Psoas muscle (tissue), 8 donors: ENCODE measurements at regions of chr9 and their contacts with region 1.

Region 1: GRCh38 chr9:89549031-89549644 is 51.2 kb upstream of the SEMA4D start:
- DNase-seq: peak; percentile 76 to 89
- ATAC-seq: peak; percentile 95 to 99 (median 96)
- H3K4me3 ChIP-seq: no peak overlapping the region
- H3K27ac ChIP-seq: no peak overlapping the region
- H3K4me1 ChIP-seq: no peaks in the 10 kb centered on the region
- H3K27me3 ChIP-seq: no peaks in the 10 kb centered on the region
- CTCF ChIP-seq: peak; percentile 98

Region 2: DNA sequence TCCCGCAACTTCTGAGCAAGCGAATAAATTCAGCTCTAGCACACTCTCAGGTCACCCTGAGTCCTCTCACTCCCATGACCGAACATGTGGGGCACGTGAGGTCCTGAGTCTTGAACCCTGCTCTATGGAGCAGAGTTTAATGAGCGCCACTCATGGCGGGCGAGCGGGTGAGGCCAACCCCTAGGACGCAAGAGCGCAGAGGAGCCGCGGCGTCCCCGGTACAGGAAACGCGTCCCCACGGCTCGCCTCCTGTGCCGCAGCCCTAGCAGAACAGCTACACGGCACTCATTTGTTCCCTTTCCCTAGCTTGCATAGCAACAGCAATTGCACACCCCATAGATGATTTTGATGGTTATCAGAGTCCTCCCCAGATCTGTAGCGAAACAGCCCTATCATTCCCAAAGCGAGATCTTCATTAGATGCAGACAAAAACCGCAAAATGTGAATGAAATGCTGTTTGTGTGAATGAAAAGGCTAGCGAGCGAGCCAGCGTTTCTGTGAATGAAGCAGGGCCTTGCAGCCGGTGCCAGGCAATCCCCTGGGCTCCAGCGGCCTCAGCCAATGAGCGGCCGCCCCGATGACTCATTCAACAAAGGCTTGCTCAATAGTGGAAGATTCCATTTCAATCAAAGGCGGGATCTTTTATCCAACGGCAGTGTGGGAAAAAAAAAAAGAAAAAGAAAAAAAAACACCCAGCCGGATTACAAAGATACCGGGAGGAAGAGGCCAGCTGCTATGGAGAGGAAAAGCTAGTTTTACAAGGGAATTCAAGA is 369.1 kb before region 1 on chr9:
- intact Hi-C with region 1: loop called in 1 of 2 experiments (anchors 10 kb)
- DNase-seq: peak; percentile 89 to 92
- ATAC-seq: peak; percentile 93 to 98 (median 96)
- H3K4me3 ChIP-seq: peak overlapping the region; percentile 66
- H3K27ac ChIP-seq: peak overlapping the region; percentile 59
- H3K4me1 ChIP-seq: peaks cover 17% of the 10 kb centered on the region
- H3K27me3 ChIP-seq: peaks cover 4 to 39% (median 17%) of the 10 kb centered on the region in 3 donors
- CTCF ChIP-seq: no peak

Region 3: GRCh38 chr9:89265214-89265613 is 283.9 kb before region 1 on chr9:
- intact Hi-C with region 1: no loop called
- DNase-seq: no peak
- ATAC-seq: no peak
- H3K4me3 ChIP-seq: no peak overlapping the region
- H3K27ac ChIP-seq: no peak overlapping the region
- H3K4me1 ChIP-seq: no peaks in the 10 kb centered on the region
- H3K27me3 ChIP-seq: no peaks in the 10 kb centered on the region
- CTCF ChIP-seq: no peak

Region 4: GRCh38 chr9:89323390-89323789 is 225.7 kb before region 1 on chr9:
- intact Hi-C with region 1: loop called (anchors 2 to 10 kb)
- DNase-seq: no peak
- ATAC-seq: no peak
- H3K4me3 ChIP-seq: no peak overlapping the region
- H3K27ac ChIP-seq: peak overlapping the region; percentile 47
- H3K4me1 ChIP-seq: peaks cover 56% of the 10 kb centered on the region
- H3K27me3 ChIP-seq: no peaks in the 10 kb centered on the region
- CTCF ChIP-seq: no peak

Region 5: DNA sequence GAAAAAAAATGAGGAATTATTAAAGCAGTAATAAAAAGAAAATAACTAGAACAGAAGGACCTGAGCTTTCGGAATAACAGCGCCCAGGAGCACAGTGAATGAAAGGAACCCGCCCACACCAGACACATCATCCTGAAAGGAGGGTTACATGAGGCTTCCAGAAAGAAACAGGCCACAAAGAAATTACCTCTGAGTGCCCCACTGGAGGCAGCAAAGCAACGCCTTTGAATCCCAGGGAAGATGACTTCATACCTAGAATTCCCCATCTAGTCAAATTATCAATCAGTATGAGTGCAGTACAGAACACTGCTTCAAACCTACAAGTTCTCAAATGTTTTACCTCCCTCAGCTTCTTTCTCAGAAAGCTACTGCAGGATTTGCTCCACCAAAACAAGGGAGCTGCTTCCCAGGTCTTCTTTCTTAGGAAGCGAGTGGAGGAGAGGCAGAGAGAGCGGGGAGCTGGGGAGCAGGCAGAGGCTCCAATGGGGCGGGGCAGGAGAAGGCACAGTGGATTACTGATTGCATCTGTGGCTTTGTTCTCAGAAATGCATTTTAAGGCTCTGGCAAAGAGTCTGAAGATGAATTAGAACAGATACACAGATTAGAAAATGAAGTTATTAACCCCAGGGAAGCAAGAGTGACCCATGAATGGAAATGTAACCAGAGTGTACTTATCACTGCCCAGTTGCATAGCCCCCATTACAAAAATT is 138.3 kb before region 1 on chr9:
- intact Hi-C with region 1: loop called (anchors 10 kb)
- DNase-seq: peak in 1 of 2 donors; percentile 23
- ATAC-seq: no peak
- H3K4me3 ChIP-seq: no peak overlapping the region
- H3K27ac ChIP-seq: peak overlapping the region; percentile 58
- H3K4me1 ChIP-seq: peaks cover 50% of the 10 kb centered on the region
- H3K27me3 ChIP-seq: no peaks in the 10 kb centered on the region
- CTCF ChIP-seq: no peak

Region 6: GRCh38 chr9:89473762-89474469 is 75.2 kb before region 1 on chr9:
- intact Hi-C with region 1: no loop called
- DNase-seq: no peak
- ATAC-seq: peak in 2 of 4 donors; percentile 40 to 44
- H3K4me3 ChIP-seq: no peak overlapping the region
- H3K27ac ChIP-seq: no peak overlapping the region
- H3K4me1 ChIP-seq: peaks cover 36% of the 10 kb centered on the region
- H3K27me3 ChIP-seq: no peaks in the 10 kb centered on the region
- CTCF ChIP-seq: no peak

Region 7: GRCh38 chr9:89497978-89498851 is 50.9 kb before region 1 on chr9 and contains the start of gene SEMA4D:
- intact Hi-C with region 1: loop called in 1 of 2 experiments (anchors 5 kb)
- DNase-seq: peak; percentile 72 to 75
- ATAC-seq: peak; percentile 65 to 80 (median 78)
- H3K4me3 ChIP-seq: peak within 1 kb of the TSS; percentile 79
- H3K27ac ChIP-seq: peak within 1 kb of the TSS; percentile 90
- H3K4me1 ChIP-seq: peaks cover 37% of the 10 kb centered on the region
- H3K27me3 ChIP-seq: no peaks in the 10 kb centered on the region
- CTCF ChIP-seq: no peak
- total RNA-seq, gene SEMA4D: 32.1 to 111 (median 63.6) TPM

Region 8: DNA sequence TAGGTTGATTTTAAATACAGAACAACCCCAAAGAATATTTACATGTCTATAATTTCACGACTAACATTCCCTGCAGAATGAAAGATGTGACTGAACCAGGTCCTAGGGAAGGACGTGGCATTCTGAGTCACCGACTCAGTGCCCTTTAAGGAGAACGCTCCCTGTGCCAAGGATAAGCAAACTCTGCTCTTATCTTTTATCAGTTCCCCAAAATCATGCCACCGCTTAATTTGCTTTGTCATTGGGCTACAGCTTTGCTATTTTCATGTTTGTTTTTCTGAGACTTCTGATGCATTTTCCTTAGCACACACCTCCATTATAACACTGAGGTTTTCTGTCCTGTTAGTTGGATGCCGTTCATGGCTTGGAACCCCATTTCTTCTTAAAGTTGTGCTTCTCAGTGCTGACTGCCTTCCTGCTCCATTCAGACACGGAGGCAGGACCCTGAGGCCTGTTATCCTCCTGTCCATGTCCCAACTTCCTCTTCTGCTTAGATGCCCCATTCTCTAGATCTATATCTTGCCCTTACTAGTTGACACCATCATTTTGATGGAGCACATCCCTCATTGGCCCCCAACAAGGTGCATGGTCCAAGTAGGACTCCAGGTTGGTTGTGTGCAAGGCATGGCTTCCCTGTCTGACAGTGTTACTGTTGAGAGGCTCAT is 40.1 kb before region 1 on chr9:
- intact Hi-C with region 1: no loop called
- DNase-seq: no peak
- ATAC-seq: no peak
- H3K4me3 ChIP-seq: no peak overlapping the region
- H3K27ac ChIP-seq: no peak overlapping the region
- H3K4me1 ChIP-seq: no peaks in the 10 kb centered on the region
- H3K27me3 ChIP-seq: no peaks in the 10 kb centered on the region
- CTCF ChIP-seq: no peak